ENCODE measurements at regions of chr14 and their contacts with region 1.

Region 1: GRCh38 chr14:99946652-99947489 is 118.4 kb upstream of the EVL start:
- DNase-seq: peak; percentile 64
- H3K4me3 Mint-ChIP-seq: no peak overlapping the region
- H3K27ac Mint-ChIP-seq: no peak overlapping the region
- H3K4me1 Mint-ChIP-seq: peaks cover 21% of the 10 kb centered on the region
- H3K27me3 Mint-ChIP-seq: peaks cover 16% of the 10 kb centered on the region

Region 2: GRCh38 chr14:99930420-99931274 is 16.2 kb before region 1 on chr14:
- CTCF ChIA-PET with region 1: interaction called, 5 read pairs
- intact Hi-C with region 1: loop called (anchors 1 kb)
- DNase-seq: peak; percentile 86
- H3K4me3 Mint-ChIP-seq: no peak overlapping the region
- H3K27ac Mint-ChIP-seq: peak overlapping the region; percentile 53
- H3K4me1 Mint-ChIP-seq: peaks cover 8% of the 10 kb centered on the region
- H3K27me3 Mint-ChIP-seq: peaks cover 3% of the 10 kb centered on the region

Region 3: GRCh38 chr14:100203949-100204834 is 257.3 kb after region 1 on chr14:
- CTCF ChIA-PET with region 1: no interaction called
- intact Hi-C with region 1: no loop called
- DNase-seq: no peak
- H3K4me3 Mint-ChIP-seq: no peak overlapping the region
- H3K27ac Mint-ChIP-seq: no peak overlapping the region
- H3K4me1 Mint-ChIP-seq: no peaks in the 10 kb centered on the region
- H3K27me3 Mint-ChIP-seq: no peaks in the 10 kb centered on the region

Measured in activated naive CD4-positive, alpha-beta T cell treated with anti-CD3 and anti-CD28 coated beads for 36 hours (primary cell).